GM12878 (cell line): ENCODE measurements at regions of chr7 and their contacts with region 1.

Region 1: GRCh38 chr7:55288070-55288824 is 76.9 kb upstream of the LANCL2 start:
- DNase-seq: no peak
- ATAC-seq: peak; percentile 86
- H3K4me3 ChIP-seq: no peak overlapping the region
- H3K27ac ChIP-seq: no peak overlapping the region
- H3K4me1 ChIP-seq: no peaks in the 10 kb centered on the region
- H3K27me3 ChIP-seq: no peaks in the 10 kb centered on the region; a peak in 1 of 4 replicates
- CTCF ChIP-seq: no peak; a peak in 1 of 6 replicates
- EP300 ChIP-seq: no peak
- POLR2A ChIP-seq: no peak
- RAD21 ChIP-seq: peak; percentile 51

Region 2: DNA sequence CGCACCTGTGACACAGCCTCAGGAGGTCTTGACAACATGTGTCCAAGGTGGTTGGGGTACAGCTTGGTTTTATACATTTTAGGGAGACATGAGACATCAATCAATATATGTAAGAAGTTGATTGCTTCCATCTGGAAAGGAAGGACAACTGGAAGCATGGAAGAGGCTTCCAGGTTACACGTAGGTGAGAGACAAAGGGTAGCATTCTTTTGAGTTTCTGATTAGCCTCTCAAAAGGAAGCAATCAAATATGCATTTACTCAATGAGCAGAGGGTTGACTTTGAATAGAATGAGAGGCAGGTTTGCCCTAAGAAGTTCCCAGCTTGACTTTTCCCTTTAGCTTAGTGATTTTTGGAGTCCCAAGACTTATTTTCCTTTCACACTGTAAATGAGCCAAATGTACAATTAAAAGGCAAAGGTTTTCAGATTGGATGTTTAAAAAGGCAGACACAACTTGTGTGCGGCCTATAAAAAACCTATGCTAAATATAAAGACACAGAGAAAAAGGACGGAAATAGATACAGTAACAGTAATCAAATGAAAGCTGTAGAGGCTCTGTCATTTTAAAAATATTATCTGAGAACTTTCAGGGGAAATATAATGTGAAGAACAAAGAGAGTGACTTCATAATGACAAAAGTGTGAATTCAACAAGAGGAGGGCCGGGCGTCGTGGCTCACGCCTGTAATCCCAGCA is 11.2 kb after region 1 on chr7:
- CTCF ChIA-PET with region 1: interaction called, 8 read pairs
- POLR2A ChIA-PET with region 1: no interaction called
- RAD21 ChIA-PET with region 1: interaction called, 12 read pairs
- SMC1A ChIA-PET with region 1: interaction called, 33 read pairs
- in situ Hi-C with region 1: no loop called
- intact Hi-C with region 1: no loop called
- DNase-seq: no peak
- ATAC-seq: peak; percentile 39
- H3K4me3 ChIP-seq: no peak overlapping the region
- H3K27ac ChIP-seq: no peak overlapping the region
- H3K4me1 ChIP-seq: peaks cover 4% of the 10 kb centered on the region; the same call in 1 of the 2 replicates
- H3K27me3 ChIP-seq: no peaks in the 10 kb centered on the region
- CTCF ChIP-seq: no peak
- EP300 ChIP-seq: no peak; a peak in 1 of 4 replicates
- POLR2A ChIP-seq: no peak
- RAD21 ChIP-seq: no peak

Region 3: DNA sequence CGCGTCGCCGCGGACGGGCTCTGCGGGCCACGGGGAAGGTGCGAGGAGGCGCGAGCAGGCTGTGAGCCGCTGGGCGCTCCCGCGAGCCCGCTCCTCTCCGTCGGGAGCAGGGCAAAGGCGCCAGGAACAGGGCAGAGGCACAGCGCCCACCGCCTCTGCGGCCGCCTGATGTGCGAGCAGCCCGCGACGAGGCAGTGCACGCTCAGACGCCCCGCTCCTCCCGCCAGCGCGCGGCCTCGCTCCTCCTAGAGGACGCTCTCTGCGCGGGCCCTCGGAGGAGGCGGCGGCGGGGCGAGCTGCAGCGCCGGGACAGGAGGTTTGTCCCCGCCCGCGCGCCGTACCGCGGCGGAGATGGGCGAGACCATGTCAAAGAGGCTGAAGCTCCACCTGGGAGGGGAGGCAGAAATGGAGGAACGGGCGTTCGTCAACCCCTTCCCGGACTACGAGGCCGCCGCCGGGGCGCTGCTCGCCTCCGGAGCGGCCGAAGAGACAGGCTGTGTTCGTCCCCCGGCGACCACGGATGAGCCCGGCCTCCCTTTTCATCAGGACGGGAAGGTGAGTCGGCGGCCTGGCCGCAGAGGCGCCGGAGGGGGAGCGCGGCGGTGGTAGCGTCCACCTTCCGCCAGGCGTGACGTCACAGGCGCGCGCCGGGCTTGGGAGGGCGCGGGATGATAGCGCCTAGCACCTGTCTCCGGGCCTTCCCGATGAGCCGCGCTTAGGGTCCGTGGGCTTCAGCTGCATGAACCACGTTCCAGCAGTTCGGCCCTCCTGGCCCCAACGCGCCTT is 77.6 kb after region 1 on chr7:
- CTCF ChIA-PET with region 1: interaction called, 4 read pairs
- POLR2A ChIA-PET with region 1: interaction called, 8 read pairs
- RAD21 ChIA-PET with region 1: interaction called, 11 read pairs
- SMC1A ChIA-PET with region 1: interaction called, 4 read pairs
- in situ Hi-C with region 1: no loop called
- intact Hi-C with region 1: no loop called
- DNase-seq: peak; percentile 79
- ATAC-seq: peak; percentile 90
- H3K4me3 ChIP-seq: peak overlapping the region; percentile 99
- H3K27ac ChIP-seq: peak overlapping the region; percentile 91
- H3K4me1 ChIP-seq: peaks cover 9% of the 10 kb centered on the region
- H3K27me3 ChIP-seq: no peaks in the 10 kb centered on the region
- CTCF ChIP-seq: peak in 2 of 3 experiments; percentile 30 to 32; a peak in 3 of 6 replicates
- EP300 ChIP-seq: peak in 1 of 2 experiments; percentile 22; a peak in 1 of 4 replicates
- POLR2A ChIP-seq: peak; percentile 93
- RAD21 ChIP-seq: peak; percentile 31; the same call in 1 of the 2 replicates